PC-3 (cell line): ENCODE measurements at regions of chr10 and their contacts with region 1.

Region 1: DNA sequence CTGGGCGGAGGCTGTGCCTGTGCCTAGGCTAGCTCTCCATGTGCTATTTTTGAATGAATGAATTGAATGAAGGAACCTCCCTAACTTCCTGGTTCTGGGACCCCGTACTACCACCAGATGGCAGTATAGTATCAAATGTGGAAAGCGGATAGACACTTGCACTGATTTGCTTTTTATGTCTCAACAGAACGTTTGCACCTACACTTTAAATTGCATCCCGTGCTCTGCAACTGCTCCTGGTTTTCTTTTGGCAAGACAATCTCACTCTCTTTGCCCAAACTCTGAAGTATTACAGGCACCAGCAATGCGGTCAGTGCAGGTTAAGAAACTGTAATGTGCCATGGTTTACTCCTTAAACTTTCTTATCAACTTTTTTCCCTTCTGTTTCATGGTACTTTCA is 6.5 kb downstream of the FZD8 start:
- DNase-seq: peak; percentile 100
- ATAC-seq: peak; percentile 21
- H3K4me3 ChIP-seq: peak overlapping the region; percentile 69
- H3K27ac ChIP-seq: peak overlapping the region; percentile 71
- H3K4me1 ChIP-seq: peaks cover 63% of the 10 kb centered on the region
- H3K27me3 ChIP-seq: no peaks in the 10 kb centered on the region
- CTCF ChIP-seq: peak; percentile 100

Region 2: DNA sequence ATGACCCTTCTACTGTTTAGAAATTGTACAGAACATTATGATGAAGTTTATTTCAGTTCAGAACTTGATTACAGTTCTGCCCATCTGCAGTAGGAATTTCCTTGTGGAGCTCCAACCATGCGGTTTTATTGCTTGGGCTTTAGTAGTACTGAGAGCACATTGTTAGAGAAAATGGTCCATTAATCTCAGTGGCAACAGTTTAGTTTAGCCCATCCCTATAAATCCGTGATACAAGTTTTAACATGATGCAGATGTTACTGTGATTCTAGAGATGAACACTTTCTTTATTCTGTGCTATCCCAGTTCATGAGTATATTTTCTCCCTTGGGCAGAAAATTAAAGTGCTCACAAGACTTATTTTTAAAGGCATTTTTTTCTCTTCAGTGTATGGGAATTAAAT is 91.3 kb after region 1 on chr10:
- CTCF ChIA-PET with region 1: no interaction called
- POLR2A ChIA-PET with region 1: no interaction called
- intact Hi-C with region 1: no loop called
- DNase-seq: no peak
- ATAC-seq: no peak
- H3K4me3 ChIP-seq: no peak overlapping the region
- H3K27ac ChIP-seq: no peak overlapping the region
- H3K4me1 ChIP-seq: no peaks in the 10 kb centered on the region
- H3K27me3 ChIP-seq: 0 out of 2 replicates have a peak, but pooled peaks cover 4% of the 10 kb centered on the region
- CTCF ChIP-seq: no peak

Region 3: GRCh38 chr10:35916791-35917190 is 281.2 kb after region 1 on chr10:
- CTCF ChIA-PET with region 1: interaction called, 3 read pairs
- POLR2A ChIA-PET with region 1: no interaction called
- intact Hi-C with region 1: loop called (anchors 2 kb)
- DNase-seq: peak; percentile 64
- ATAC-seq: peak; percentile 21
- H3K4me3 ChIP-seq: no peak overlapping the region
- H3K27ac ChIP-seq: no peak overlapping the region
- H3K4me1 ChIP-seq: peaks cover 22% of the 10 kb centered on the region
- H3K27me3 ChIP-seq: no peaks in the 10 kb centered on the region
- CTCF ChIP-seq: peak; percentile 68

Region 4: DNA sequence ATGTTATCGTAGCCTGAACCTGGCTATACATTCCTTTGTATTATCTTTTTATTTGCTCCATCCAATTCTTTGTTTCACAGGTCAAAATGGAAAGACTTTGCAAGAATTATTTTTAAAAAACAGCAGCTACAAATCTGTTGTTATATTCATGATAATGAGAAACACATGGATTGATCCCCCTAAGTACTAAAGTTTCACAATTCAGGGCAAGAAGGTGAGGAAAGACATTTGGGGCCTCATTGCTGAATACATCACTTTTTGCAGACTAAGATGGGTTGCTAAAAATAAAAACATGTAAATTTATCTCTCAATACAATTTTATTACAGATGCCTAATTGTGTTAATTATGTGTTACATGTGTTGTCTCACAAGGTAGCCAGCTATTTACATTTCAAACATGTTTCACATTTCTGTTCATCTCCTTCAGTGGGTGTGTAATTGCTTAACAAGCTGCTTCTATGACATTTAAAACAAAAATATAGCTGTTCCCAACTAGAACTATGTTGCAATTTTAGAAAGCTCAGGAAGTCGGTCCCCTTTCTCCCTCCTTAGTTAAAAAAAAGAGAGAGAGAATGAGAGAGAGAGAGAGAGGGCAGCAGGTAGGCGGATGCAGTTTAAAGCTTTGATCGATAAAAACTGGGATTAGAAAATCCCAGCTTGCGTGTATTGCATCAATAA is 612.9 kb after region 1 on chr10:
- CTCF ChIA-PET with region 1: interaction called, 3 read pairs
- POLR2A ChIA-PET with region 1: interaction called, 10 read pairs
- intact Hi-C with region 1: loop called (anchors 10 kb)
- DNase-seq: no peak
- ATAC-seq: no peak
- H3K4me3 ChIP-seq: no peak overlapping the region
- H3K27ac ChIP-seq: no peak overlapping the region
- H3K4me1 ChIP-seq: no peaks in the 10 kb centered on the region
- H3K27me3 ChIP-seq: no peaks in the 10 kb centered on the region
- CTCF ChIP-seq: no peak

Region 5: GRCh38 chr10:36489611-36490228 is 854.1 kb after region 1 on chr10:
- CTCF ChIA-PET with region 1: interaction called, 13 read pairs
- POLR2A ChIA-PET with region 1: interaction called, 8 read pairs
- intact Hi-C with region 1: loop called (anchors 1 kb)
- DNase-seq: peak; percentile 96
- ATAC-seq: peak; percentile 9
- H3K4me3 ChIP-seq: no peak overlapping the region
- H3K27ac ChIP-seq: peak overlapping the region; percentile 83
- H3K4me1 ChIP-seq: peaks cover 55% of the 10 kb centered on the region
- H3K27me3 ChIP-seq: no peaks in the 10 kb centered on the region
- CTCF ChIP-seq: no peak

Region 6: GRCh38 chr10:36634916-36635315 is 999.3 kb after region 1 on chr10:
- CTCF ChIA-PET with region 1: interaction called, 3 read pairs
- POLR2A ChIA-PET with region 1: interaction called, 10 read pairs
- intact Hi-C with region 1: loop called (anchors 2 kb)
- DNase-seq: peak; percentile 82
- ATAC-seq: peak; percentile 45
- H3K4me3 ChIP-seq: no peak overlapping the region
- H3K27ac ChIP-seq: peak overlapping the region; percentile 52
- H3K4me1 ChIP-seq: peaks cover 36% of the 10 kb centered on the region
- H3K27me3 ChIP-seq: no peaks in the 10 kb centered on the region
- CTCF ChIP-seq: no peak

Region 7: DNA sequence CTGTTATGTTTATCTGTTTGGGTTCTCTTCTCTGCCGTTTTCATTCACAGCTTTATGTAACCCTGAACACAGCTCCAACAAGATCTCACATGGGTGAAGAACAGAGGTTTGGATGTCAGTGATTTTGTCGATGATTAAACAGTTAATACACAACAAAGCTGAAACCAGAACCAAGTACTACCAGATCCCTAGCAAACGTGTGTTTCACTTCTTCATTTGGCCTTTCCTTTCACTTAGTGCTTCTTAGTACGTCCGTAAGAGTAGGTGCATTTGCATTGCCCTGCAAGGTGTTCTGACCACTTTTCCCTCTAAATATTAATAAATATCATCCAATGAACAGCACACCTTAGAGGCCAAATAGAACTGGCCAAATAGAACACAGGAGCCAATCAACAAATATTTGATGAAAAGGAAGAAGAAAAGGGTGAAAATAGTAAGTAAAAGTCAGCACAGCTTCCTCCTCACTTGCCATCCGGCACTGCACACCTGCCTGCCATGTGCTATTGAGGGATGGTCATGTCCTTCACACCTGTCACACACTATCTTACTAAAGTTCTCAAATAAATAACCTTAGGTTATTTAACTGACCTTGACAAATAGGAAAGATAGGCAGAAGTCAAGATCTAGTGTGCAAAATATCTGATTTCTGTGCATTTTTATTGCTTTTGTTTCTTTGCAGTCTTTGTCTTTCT is 1237.3 kb after region 1 on chr10:
- CTCF ChIA-PET with region 1: interaction called, 3 read pairs
- POLR2A ChIA-PET with region 1: interaction called, 10 read pairs
- intact Hi-C with region 1: no loop called
- DNase-seq: no peak
- ATAC-seq: no peak
- H3K4me3 ChIP-seq: no peak overlapping the region
- H3K27ac ChIP-seq: no peak overlapping the region
- H3K4me1 ChIP-seq: no peaks in the 10 kb centered on the region
- H3K27me3 ChIP-seq: 0 out of 2 replicates have a peak, but pooled peaks cover 3% of the 10 kb centered on the region
- CTCF ChIP-seq: no peak